BJ (cell line): ENCODE measurements at regions of chr11 and their contacts with region 1.

Region 1: DNA sequence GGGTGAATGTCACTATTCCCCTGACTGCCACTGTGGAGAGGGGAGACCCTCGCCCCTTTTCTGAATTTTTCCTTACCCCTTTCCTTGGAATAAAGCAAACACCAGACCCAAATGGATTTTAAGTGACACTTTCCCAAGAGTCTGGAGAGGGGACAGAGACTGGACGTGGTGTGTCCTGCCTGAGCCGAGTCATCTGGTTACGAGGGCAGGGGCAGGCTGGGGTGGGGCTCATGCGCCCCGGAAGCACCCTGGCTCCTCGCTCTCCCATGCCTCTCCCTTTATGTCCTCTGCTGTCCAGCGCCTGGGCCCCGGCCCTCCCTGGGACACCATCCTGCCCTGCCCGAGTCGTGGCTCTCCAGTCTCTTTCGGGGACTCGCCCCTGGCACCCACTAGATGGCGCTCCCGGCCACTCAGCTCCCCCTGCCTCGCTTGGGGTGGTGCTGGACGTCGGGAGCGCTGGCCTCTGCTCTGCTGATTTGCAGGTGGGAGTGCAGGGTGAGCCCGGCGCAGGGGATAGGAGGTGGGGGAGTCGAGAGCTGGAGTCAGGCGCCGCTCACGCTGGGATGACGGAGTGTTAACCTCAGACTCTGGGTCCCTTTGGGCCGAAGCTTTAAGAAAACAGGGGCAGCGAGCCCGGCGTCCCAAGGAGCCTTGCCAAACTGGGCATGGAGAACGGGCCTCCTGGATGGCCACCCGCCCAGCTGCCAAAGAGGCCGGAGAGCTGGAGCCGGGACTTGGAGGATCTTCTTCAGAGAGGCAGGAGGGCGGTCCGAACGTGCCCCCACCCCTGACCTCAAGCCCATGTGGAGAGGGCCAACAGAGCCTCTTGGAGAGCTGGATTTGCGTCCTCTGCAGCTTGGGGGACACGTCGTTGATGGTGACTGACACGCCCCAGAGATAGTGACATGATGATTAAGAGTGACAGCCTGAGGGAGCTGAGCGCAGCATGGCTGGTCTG is 89.9 kb downstream of the RPS6KA4 start:
- DNase-seq: no peak
- H3K4me3 ChIP-seq: no peak overlapping the region; the same call in 1 of the 2 replicates
- H3K27me3 ChIP-seq: peaks cover 7% of the 10 kb centered on the region
- CTCF ChIP-seq: peak; percentile 96

Region 2: DNA sequence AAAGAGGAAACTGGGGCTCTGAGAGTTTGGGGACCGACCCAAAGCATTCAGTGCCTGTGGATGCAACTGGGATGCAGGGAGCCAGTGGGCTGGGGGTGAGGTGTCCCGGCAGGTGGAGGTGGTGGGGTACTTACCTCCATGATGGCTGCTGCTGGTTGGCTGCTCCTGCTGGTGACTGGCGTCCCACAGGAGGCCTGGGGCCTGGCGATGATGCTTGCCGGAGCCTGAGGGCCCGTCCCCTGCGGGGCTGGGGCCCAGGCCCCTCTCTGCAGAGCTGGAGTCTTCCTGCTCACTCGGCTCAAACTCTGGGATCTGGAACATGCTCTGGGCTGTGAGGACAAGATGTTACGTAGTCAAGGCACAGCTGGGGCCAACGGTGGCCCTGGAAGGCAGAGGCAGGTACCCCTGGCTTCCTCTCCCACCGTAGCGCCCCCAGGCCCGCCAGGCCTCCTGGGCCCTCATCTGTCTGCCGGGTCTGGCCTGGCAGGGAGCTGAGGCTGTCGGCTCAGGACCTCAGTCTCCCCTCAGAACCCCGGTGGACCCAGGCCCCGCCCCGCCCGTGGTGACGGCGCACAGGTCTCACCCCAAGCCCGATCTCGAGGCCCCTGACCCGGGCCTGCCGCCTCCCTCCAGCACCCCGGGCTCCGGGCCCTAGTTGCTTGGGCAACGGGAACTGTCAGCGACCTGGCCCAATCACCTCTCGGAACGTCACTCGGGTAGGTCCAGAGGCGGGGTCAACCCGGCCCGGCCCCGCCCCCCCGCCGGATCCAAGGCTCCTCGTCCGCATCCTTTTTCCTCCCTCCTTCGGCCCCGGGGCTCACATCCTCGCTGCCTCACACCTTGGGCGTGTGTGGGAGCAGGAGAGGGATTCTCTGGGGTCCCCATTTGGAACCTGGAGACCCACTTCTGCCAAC is 164.6 kb before region 1 on chr11 and contains the start of gene BAD:
- CTCF ChIA-PET with region 1: no interaction called
- POLR2A ChIA-PET with region 1: no interaction called
- DNase-seq: no peak
- H3K4me3 ChIP-seq: peak within 1 kb of the TSS; percentile 90
- H3K27me3 ChIP-seq: no peaks in the 10 kb centered on the region
- CTCF ChIP-seq: no peak
- polyA plus RNA-seq, gene BAD: 62.3 and 85.3 TPM in 2 replicates

Region 3: GRCh38 chr11:64419818-64420485 is 28.9 kb before region 1 on chr11:
- CTCF ChIA-PET with region 1: interaction called, 13 read pairs
- POLR2A ChIA-PET with region 1: no interaction called
- DNase-seq: no peak
- H3K4me3 ChIP-seq: no peak overlapping the region
- H3K27me3 ChIP-seq: no peaks in the 10 kb centered on the region; the same call in 1 of the 2 replicates
- CTCF ChIP-seq: no peak

Region 4: GRCh38 chr11:64436000-64436399 is 12.9 kb before region 1 on chr11:
- CTCF ChIA-PET with region 1: interaction called, 80 read pairs
- POLR2A ChIA-PET with region 1: interaction called, 3 read pairs
- DNase-seq: no peak
- H3K4me3 ChIP-seq: no peak overlapping the region
- H3K27me3 ChIP-seq: peaks cover 16% of the 10 kb centered on the region
- CTCF ChIP-seq: no peak

Region 5: GRCh38 chr11:64466115-64466718 is 17.3 kb after region 1 on chr11:
- CTCF ChIA-PET with region 1: interaction called, 27 read pairs
- POLR2A ChIA-PET with region 1: no interaction called
- DNase-seq: no peak
- H3K4me3 ChIP-seq: no peak overlapping the region
- H3K27me3 ChIP-seq: peaks cover 7% of the 10 kb centered on the region
- CTCF ChIP-seq: no peak